Activated T-helper 1 cell treated with anti-CD3 and anti-CD28 coated beads, Interleukin-12 subunit alpha, Interleukin-12 subunit beta, Interleukin-2, Interleukin-4 antibody, amounts not matched to agents 30 ng/mL and 10 ng/mL and 1 ng/mL, durations not matched to agents 14 hours and 24 hours and 36 hours (primary cell): ENCODE measurements at regions of chr2 and their contacts with region 1.

Region 1: GRCh38 chr2:180006781-180007579 is at the start of gene CWC22:
- DNase-seq: peak; percentile 79
- H3K4me3 Mint-ChIP-seq: peak within 1 kb of the TSS; percentile 94
- H3K27ac Mint-ChIP-seq: peak within 1 kb of the TSS; percentile 97
- H3K4me1 Mint-ChIP-seq: peaks cover 26% of the 10 kb centered on the region
- H3K27me3 Mint-ChIP-seq: no peaks in the 10 kb centered on the region
- total RNA-seq, gene CWC22: 29.6 and 30.9 TPM in 2 replicates

Region 2: DNA sequence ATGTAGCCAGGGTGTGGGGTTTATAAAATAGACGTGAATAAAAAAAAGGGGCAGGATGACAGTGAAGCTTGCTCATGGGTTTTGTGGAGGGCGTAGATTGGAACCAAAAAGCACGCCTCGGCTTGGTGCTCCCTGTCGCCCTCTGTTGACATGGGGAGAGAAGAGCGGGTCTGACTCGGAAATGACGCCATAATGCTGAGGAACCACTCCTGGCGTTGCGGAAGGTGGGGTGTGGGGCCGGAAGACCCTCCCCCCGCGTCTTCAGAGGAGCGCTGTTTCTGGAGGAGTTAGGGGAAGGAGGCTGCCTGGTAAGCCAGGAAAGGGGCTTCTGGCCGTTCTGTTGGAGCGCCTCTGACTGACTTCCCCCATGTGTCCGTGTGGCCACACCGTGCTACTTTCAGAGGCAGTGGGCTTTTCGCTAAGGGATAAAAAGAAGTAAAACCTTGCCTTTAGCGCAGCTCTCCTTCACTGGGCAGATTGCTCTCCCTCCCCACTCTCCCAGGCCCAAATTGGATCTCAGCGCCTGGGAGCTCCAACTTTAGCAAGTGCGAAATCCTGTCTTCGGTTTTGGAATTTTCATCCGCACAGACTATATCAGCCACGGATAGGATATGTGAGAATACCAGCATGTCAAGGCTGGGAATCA is 1483.9 kb before region 1 on chr2:
- intact Hi-C with region 1: loop called (anchors 5 kb)
- DNase-seq: peak; percentile 80
- H3K4me3 Mint-ChIP-seq: peak overlapping the region; percentile 99
- H3K27ac Mint-ChIP-seq: peak overlapping the region; percentile 92
- H3K4me1 Mint-ChIP-seq: peaks cover 42% of the 10 kb centered on the region
- H3K27me3 Mint-ChIP-seq: no peaks in the 10 kb centered on the region

Region 3: GRCh38 chr2:179963626-179964025 is 43.4 kb before region 1 on chr2:
- intact Hi-C with region 1: loop called (anchors 5 kb)
- DNase-seq: no peak
- H3K4me3 Mint-ChIP-seq: no peak overlapping the region
- H3K27ac Mint-ChIP-seq: peak overlapping the region; percentile 10
- H3K4me1 Mint-ChIP-seq: peaks cover 5% of the 10 kb centered on the region
- H3K27me3 Mint-ChIP-seq: no peaks in the 10 kb centered on the region

Region 4: GRCh38 chr2:179995741-179996515 is 11.1 kb before region 1 on chr2:
- intact Hi-C with region 1: loop called (anchors 1 kb)
- DNase-seq: no peak
- H3K4me3 Mint-ChIP-seq: no peak overlapping the region
- H3K27ac Mint-ChIP-seq: no peak overlapping the region
- H3K4me1 Mint-ChIP-seq: peaks cover 28% of the 10 kb centered on the region
- H3K27me3 Mint-ChIP-seq: no peaks in the 10 kb centered on the region

Region 5: GRCh38 chr2:180319586-180320405 is 312.8 kb after region 1 on chr2:
- intact Hi-C with region 1: no loop called
- DNase-seq: no peak
- H3K4me3 Mint-ChIP-seq: no peak overlapping the region
- H3K27ac Mint-ChIP-seq: no peak overlapping the region
- H3K4me1 Mint-ChIP-seq: no peaks in the 10 kb centered on the region
- H3K27me3 Mint-ChIP-seq: no peaks in the 10 kb centered on the region

Region 6: DNA sequence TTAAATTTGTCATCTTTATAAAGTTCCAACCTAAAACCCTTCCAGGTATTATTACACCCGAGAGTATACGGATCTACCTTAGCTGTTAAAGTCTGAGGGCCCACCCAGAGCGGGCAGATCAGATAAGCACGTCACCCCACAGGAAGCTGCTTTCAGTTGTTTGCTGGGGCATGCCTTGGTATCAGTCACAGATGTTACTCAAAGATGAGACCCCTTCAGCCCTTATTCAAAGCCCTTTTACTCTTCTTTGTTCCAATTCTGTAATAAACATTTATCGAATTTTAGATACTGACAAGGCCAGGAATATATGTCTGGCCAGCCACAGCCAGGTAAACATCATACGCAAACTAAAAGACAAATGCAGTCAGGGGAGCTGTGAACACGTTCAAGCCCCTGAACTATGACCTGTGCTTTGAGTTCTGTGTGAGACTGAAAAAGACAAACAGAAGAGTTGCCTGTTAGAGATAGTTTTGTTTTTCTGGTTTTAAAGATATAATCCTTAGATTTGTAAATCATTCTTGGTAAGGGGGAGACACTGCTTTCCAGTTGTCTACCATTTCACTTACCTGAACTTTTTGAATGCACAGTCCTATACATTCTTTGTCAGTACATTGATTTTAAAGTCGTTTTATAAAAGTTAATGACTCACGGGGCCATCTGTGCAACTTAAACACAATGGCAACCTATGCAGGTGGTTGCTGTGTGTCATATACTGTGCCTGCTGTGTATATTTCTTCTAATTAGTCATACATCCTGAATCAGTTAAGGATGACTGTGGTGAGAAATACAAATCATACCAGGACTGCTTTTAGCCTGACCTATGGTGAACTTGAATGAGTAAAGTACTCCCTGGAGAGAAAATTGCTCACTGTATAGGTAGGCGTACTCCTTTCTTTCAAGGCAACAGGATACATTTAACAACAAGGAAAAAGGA is 1784.0 kb after region 1 on chr2:
- intact Hi-C with region 1: loop called (anchors 1 kb)
- DNase-seq: peak; percentile 3
- H3K4me3 Mint-ChIP-seq: no peak overlapping the region
- H3K27ac Mint-ChIP-seq: peak overlapping the region; percentile 38
- H3K4me1 Mint-ChIP-seq: peaks cover 33% of the 10 kb centered on the region
- H3K27me3 Mint-ChIP-seq: no peaks in the 10 kb centered on the region